Activated CD8-positive, alpha-beta T cell treated with anti-CD3 and anti-CD28 coated beads, Interleukin-2, amount 10 ng/mL, durations not matched to agents 7 days and 5 days (primary cell): ENCODE measurements at regions of chr16 and their contacts with region 1.

Region 1: GRCh38 chr16:56576585-56577293 is 11.9 kb downstream of the MT4 start:
- DNase-seq: peak; percentile 93
- ATAC-seq: peak; percentile 100
- H3K4me3 Mint-ChIP-seq: no peak overlapping the region
- H3K27ac Mint-ChIP-seq: peak overlapping the region; percentile 72
- H3K4me1 Mint-ChIP-seq: peaks cover 10% of the 10 kb centered on the region
- H3K27me3 Mint-ChIP-seq: peaks cover 17% of the 10 kb centered on the region

Region 2: GRCh38 chr16:56564773-56565477 is 11.8 kb before region 1 on chr16 and contains the start of gene MT4:
- CTCF ChIA-PET with region 1: interaction called, 17 read pairs
- POLR2A ChIA-PET with region 1: no interaction called
- DNase-seq: no peak
- ATAC-seq: no peak
- H3K4me3 Mint-ChIP-seq: no peak within 1 kb of the TSS
- H3K27ac Mint-ChIP-seq: no peak within 1 kb of the TSS
- H3K4me1 Mint-ChIP-seq: peaks cover 3% of the 10 kb centered on the region
- H3K27me3 Mint-ChIP-seq: peaks cover 13% of the 10 kb centered on the region
- total RNA-seq, gene MT4: not detected

Region 3: DNA sequence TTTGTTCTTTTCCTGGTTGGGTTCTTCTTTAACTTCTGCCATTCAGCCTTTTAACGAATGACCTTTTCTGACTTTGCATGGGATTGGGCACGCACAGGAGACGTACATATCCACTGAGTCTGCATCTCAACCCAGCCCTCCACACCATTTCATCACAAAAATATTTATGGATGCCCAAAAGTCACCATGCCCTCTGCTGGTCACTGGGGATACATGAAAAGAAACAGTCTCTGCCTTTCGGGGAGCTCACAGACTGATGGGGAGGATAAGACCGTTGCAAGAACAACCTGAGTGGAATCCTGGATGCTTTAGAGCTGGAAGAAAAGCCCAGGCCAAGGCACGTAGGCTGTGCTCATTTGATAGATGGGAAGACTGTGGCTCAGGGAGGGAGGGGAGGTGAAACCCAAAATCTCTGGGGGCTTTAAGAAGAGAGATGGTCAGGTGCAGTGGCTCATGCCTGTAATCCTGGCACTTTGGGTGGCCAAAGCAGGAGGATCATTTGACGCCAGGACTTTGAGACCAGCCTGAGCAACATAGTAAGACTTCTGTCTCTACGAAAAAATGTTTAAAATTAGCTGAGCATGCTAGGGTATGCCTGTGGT is 23.8 kb after region 1 on chr16:
- CTCF ChIA-PET with region 1: interaction called, 31 read pairs
- POLR2A ChIA-PET with region 1: no interaction called
- DNase-seq: peak; percentile 60
- ATAC-seq: peak; percentile 72
- H3K4me3 Mint-ChIP-seq: no peak overlapping the region
- H3K27ac Mint-ChIP-seq: no peak overlapping the region
- H3K4me1 Mint-ChIP-seq: peaks cover 7% of the 10 kb centered on the region
- H3K27me3 Mint-ChIP-seq: peaks cover 16% of the 10 kb centered on the region

Region 4: GRCh38 chr16:56643080-56643778 is 66.5 kb after region 1 on chr16:
- CTCF ChIA-PET with region 1: interaction called, 19 read pairs
- POLR2A ChIA-PET with region 1: no interaction called
- DNase-seq: peak; percentile 87
- ATAC-seq: peak; percentile 100
- H3K4me3 Mint-ChIP-seq: peak overlapping the region; percentile 66
- H3K27ac Mint-ChIP-seq: no peak overlapping the region
- H3K4me1 Mint-ChIP-seq: peaks cover 28% of the 10 kb centered on the region
- H3K27me3 Mint-ChIP-seq: peaks cover 69% of the 10 kb centered on the region

Region 5: GRCh38 chr16:56789360-56789759 is 212.6 kb after region 1 on chr16:
- CTCF ChIA-PET with region 1: interaction called, 15 read pairs
- POLR2A ChIA-PET with region 1: no interaction called
- DNase-seq: peak; percentile 57
- ATAC-seq: peak; percentile 69
- H3K4me3 Mint-ChIP-seq: no peak overlapping the region
- H3K27ac Mint-ChIP-seq: no peak overlapping the region
- H3K4me1 Mint-ChIP-seq: no peaks in the 10 kb centered on the region
- H3K27me3 Mint-ChIP-seq: no peaks in the 10 kb centered on the region